ENCODE measurements at regions of chr2 and their contacts with region 1.

Region 1: DNA sequence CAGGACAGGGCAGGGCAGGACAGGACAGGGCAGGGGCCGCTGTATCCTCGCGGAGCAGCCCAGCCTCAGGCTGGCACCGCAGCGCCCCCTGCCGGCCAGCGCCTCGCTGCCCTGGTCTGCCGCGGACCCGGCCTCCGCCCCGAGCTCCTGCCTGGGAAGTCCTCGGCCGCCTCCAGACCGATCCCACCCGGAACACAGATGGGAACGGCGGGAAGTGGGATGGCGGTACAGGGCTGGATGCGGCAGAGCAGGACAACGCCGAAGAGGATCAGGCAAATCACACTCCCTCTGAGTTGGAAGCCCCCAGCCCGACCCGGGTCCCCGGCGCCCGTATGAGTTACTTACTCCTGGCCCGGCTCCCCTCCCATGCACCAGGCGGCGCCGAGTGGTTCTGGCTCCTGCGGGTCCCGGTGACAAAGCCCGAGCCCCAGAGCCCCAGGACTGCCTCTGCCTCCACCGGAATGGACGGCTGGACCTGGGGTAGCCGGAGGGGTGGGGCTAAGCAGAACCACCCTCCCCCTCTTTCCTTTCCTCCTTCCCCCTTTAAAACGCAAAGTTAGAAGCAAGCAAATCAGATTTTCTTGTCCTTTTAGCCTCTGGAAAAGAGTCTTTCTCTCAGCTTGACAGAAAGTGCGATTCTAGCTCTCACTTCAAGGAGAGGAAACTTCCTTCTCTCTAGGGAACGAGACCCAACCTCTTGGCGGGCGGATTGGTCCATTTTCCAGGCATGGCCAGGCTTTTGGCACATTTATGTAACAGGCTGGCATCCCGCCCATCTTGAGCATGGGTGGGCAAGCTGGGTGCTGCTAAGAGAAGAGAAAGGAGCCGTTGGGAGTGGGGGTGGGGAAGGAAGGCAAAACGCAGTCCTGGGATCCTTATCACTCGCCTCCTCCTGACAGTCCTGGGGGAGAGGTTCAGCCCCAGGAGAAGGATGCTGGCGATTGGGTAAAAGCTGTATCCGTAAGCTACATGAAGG is at the start of gene TP53I3:
- DNase-seq: peak; percentile 89 to 91
- ATAC-seq: peak; percentile 75
- total RNA-seq, gene TP53I3: 91.7 to 109 TPM

Region 2: GRCh38 chr2:23824777-23825212 is 259.9 kb before region 1 on chr2:
- intact Hi-C with region 1: loop called in 1 of 2 experiments (anchors 10 kb)
- DNase-seq: no peak
- ATAC-seq: peak; percentile 64

Region 3: DNA sequence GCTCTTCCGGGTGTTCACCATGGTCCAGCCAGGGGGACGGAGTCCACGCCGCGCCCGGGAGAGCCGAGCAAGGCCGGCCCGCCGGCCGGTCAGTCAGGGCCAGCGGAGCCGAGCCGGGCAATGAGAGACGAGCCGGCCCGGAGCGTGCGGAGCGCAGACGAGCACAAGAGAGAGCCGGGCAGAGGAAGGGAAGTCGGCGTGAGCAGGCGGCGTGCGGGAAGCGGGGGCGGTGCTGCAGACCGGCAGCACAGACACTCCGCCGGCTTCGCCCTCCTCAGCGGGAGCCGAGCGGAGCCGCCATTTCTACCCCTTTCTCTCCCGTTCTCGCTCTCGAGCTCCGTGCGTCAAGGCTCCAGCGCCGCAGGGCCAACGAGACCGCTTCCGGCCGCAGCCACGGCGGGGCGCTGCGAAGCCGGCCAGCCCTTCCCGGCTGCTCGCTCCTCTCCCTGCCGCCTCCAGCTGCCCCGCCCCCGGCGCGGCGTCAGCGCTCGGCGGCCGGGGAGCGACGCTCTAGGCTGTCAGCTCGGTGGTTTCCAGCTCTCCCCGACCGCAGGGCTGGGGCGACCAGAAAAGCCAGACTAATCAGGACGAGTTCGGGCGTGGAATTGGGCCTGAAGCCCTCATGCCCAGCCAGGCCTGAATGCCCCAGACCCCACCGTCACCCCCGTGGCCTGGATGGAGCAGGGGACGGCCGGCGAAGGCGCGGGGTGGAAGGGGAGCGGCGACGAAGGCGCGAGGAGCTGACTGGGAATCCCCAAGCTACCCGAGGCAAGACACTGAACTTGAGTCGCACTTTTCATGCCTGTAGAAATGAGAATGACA is 157.7 kb before region 1 on chr2 and contains the start of gene ATAD2B:
- intact Hi-C with region 1: loop called in 1 of 2 experiments (anchors 10 kb)
- DNase-seq: peak; percentile 83 to 93
- ATAC-seq: peak; percentile 89
- total RNA-seq, gene ATAD2B: 23.3 to 33.0 TPM